ENCODE measurements at regions of chr10 and their contacts with region 1.

Region 1: DNA sequence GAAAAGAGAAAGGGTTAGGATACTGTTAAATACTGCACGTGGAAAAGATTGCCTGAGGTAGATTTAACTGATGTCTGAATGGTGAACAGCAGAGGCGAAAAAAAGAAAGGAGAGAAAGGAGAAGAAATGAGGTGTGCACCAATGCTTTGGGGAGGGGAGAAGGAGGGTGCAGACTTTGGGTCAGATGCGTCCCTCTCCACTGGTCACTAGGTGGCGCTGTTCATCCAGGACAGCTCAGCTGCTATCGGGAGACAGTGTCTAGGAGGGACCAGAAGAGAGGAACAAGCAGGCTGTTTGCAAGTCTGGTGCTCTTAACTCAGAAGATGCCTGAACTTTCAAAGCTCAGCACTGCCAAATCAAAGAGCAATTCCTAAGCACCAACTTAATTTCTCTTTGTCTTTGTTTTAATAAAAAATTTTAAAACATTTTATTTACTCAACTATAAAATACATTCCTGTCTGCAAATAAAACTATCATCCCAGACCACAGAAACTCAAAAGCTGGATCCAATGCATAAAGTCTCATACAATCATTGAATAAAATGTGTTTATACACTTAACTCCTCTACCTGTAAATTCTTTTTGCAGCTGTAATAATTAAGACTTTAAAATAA is 83.9 kb upstream of the PDLIM1 start:
- DNase-seq: peak; percentile 81 to 90 (median 89)
- H3K4me3 ChIP-seq: no peak overlapping the region
- H3K27ac ChIP-seq: no peak overlapping the region
- H3K4me1 ChIP-seq: no peaks in the 10 kb centered on the region
- H3K27me3 ChIP-seq: peaks cover 0 to 4% (median 0%) of the 10 kb centered on the region in 5 experiments

Region 2: GRCh38 chr10:95168694-95169093 is 206.0 kb before region 1 on chr10:
- CTCF ChIA-PET with region 1: no interaction called
- POLR2A ChIA-PET with region 1: no interaction called
- DNase-seq: no peak
- H3K4me3 ChIP-seq: no peak overlapping the region
- H3K27ac ChIP-seq: no peak overlapping the region
- H3K4me1 ChIP-seq: no peaks in the 10 kb centered on the region
- H3K27me3 ChIP-seq: no peaks in the 10 kb centered on the region

Region 3: DNA sequence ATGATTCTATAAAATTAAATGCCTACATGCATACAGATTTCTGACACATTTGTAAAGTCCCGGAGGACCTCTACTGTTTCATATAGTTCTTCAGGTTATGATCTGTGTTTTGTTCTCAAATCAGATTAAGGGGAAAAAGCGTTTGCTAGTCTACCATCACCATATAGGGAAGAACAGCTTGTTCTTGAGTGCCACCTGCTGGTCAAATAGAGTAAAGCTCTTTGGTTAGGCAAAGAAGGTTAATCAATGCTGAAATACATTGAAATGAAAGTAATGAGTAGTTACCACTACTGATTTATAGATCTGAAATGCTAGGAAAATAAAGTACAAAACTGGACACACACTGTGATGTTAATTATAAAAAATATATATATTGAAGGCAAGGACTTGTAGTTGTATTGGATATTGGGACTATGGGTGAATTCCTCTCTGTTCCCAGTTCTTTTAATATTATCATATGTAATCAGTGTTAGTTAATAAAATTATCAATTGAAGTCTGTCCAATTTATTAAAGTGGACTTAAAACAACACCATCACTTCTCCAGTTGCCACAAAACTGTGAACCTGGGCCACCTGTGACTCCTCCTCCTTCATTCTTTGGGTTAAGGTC is 11.3 kb before region 1 on chr10:
- CTCF ChIA-PET with region 1: interaction called, 52 read pairs
- POLR2A ChIA-PET with region 1: no interaction called
- DNase-seq: peak; percentile 60 to 83 (median 76)
- H3K4me3 ChIP-seq: no peak overlapping the region
- H3K27ac ChIP-seq: no peak overlapping the region
- H3K4me1 ChIP-seq: no peaks in the 10 kb centered on the region
- H3K27me3 ChIP-seq: no peaks in the 10 kb centered on the region

Region 4: DNA sequence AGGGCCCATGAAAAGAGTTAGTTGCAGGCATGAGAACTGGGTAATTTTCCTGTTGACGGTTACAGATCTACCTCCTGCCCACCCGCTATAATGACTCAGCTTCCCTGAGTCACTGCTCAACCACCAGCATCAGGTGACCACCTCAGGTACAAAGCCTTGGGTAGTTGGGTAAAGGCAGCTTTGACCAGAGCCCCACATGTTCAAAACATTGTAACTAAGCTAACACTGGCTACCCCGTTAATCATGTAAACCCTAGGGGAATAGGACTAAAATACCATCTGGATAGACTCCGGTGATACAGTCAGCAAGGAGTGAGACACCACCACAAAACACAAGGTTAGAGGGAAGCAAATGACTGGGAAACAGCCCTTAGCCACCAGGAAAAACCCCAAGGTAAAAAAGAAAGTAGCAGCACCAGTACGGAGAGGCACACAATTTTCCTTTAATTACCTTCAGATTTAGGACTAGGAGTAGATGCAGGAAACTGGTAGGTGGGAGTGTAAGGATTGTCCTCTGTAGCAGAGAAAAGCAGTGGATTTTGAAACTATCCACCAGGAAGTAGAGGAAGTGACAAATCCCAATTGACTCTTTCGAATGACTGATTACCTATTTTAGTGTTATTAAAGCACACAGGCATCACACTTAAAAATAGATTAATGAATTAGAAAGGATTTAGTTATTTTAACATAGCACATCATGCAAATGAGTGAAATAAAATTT is 19.6 kb after region 1 on chr10:
- CTCF ChIA-PET with region 1: interaction called, 23 read pairs
- POLR2A ChIA-PET with region 1: no interaction called
- DNase-seq: peak; percentile 37 to 82 (median 74)
- H3K4me3 ChIP-seq: peak overlapping the region in 1 of 7 experiments; percentile 18
- H3K27ac ChIP-seq: no peak overlapping the region
- H3K4me1 ChIP-seq: peaks cover 3 to 34% (median 23%) of the 10 kb centered on the region in 4 experiments
- H3K27me3 ChIP-seq: no peaks in the 10 kb centered on the region

Region 5: GRCh38 chr10:95430231-95430951 is 55.7 kb after region 1 on chr10:
- CTCF ChIA-PET with region 1: interaction called, 18 read pairs
- POLR2A ChIA-PET with region 1: no interaction called
- DNase-seq: peak; percentile 49 to 79 (median 76)
- H3K4me3 ChIP-seq: no peak overlapping the region
- H3K27ac ChIP-seq: no peak overlapping the region
- H3K4me1 ChIP-seq: peaks cover 0 to 8% (median 1%) of the 10 kb centered on the region in 4 experiments
- H3K27me3 ChIP-seq: no peaks in the 10 kb centered on the region

Region 6: DNA sequence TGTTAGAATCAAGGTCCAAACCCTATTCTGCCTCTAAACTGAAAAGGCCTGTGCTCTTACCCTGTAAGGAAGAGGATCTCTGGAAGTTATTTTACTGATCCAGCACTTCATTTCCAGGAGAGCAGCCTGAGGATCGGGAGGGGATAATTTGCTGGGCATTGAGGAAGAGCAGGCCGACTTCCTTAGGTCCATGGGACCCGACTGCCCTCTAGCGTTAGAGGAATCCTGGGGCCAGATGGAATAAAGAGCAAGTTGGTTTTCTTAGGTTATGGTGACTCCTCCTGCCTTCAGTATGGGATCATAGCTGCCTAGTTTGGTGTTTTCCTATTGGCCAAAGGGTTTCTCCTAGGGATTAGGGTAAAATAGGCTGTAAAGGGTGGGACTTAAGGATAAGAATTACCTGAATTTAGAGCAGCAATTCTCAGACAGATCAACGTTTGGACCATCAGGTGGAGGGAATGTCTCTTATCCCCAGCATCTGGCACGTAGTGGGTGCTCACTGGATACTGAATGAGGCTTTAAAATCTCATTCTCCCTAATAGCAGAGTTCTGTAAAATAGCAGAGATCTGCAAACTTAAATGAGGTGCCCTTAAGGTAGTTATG is 226.5 kb after region 1 on chr10:
- CTCF ChIA-PET with region 1: interaction called, 123 read pairs
- POLR2A ChIA-PET with region 1: interaction called, 3 read pairs
- DNase-seq: peak; percentile 79 to 83 (median 79)
- H3K4me3 ChIP-seq: no peak overlapping the region
- H3K27ac ChIP-seq: no peak overlapping the region
- H3K4me1 ChIP-seq: no peaks in the 10 kb centered on the region
- H3K27me3 ChIP-seq: no peaks in the 10 kb centered on the region